Dorsolateral prefrontal cortex (tissue), 120 donors: ENCODE measurements at regions of chr12 and their contacts with region 1.

Region 1: GRCh38 chr12:11202811-11203210 is 16.1 kb upstream of the TAS2R42 start:
- DNase-seq: no peak
- H3K4me3 ChIP-seq: no peak overlapping the region
- H3K27ac ChIP-seq: no peak overlapping the region
- H3K27me3 ChIP-seq: no peaks in the 10 kb centered on the region
- CTCF ChIP-seq: no peak

Region 2: GRCh38 chr12:10749700-10750384 is 453.0 kb before region 1 on chr12:
- intact Hi-C with region 1: loop called in 1 of 2 experiments (anchors 5 kb)
- DNase-seq: peak; percentile 29 to 85 (median 61)
- H3K4me3 ChIP-seq: peak overlapping the region; percentile 16 to 69 (median 49)
- H3K27ac ChIP-seq: peak overlapping the region in 39 of 59 donors; percentile 2 to 84 (median 58)
- H3K27me3 ChIP-seq: peaks cover 0 to 5% (median 0%) of the 10 kb centered on the region in 45 donors
- CTCF ChIP-seq: peak; percentile 91 to 99 (median 98)

Region 3: GRCh38 chr12:10771132-10771733 is 431.6 kb before region 1 on chr12:
- intact Hi-C with region 1: loop called (anchors 5 to 10 kb)
- DNase-seq: no peak
- H3K4me3 ChIP-seq: no peak overlapping the region
- H3K27ac ChIP-seq: no peak overlapping the region
- H3K27me3 ChIP-seq: peaks cover 0 to 23% (median 0%) of the 10 kb centered on the region in 45 donors
- CTCF ChIP-seq: peak; percentile 53 to 90 (median 72)

Region 4: DNA sequence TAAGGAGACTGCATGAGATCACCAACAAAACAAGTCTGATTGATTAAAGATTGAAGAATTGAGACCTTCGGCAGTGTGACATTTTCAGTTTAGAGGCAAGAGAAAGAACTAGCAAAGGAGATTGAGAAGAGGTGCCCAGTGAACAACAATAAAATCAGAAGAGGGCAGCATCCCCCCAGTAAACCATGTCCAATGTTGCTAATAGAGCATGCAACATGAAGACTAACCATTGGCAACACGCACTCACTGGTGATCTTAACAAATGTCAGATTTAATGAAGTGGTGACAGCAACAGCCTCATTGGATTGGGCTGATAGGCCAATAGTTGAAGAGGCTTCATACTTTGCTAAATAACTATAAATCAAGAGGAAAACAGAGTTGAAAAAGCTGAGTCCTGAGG is 243.0 kb before region 1 on chr12:
- intact Hi-C with region 1: loop called (anchors 2 to 5 kb)
- DNase-seq: peak in 2 of 10 donors; percentile 26 to 33
- H3K4me3 ChIP-seq: no peak overlapping the region
- H3K27ac ChIP-seq: peak overlapping the region in 2 of 59 donors; percentile 0 to 16
- H3K27me3 ChIP-seq: no peaks in the 10 kb centered on the region
- CTCF ChIP-seq: peak in 50 of 56 donors; percentile 18 to 77 (median 47)